ENCODE measurements at regions of chr14 and their contacts with region 1.

Region 1: DNA sequence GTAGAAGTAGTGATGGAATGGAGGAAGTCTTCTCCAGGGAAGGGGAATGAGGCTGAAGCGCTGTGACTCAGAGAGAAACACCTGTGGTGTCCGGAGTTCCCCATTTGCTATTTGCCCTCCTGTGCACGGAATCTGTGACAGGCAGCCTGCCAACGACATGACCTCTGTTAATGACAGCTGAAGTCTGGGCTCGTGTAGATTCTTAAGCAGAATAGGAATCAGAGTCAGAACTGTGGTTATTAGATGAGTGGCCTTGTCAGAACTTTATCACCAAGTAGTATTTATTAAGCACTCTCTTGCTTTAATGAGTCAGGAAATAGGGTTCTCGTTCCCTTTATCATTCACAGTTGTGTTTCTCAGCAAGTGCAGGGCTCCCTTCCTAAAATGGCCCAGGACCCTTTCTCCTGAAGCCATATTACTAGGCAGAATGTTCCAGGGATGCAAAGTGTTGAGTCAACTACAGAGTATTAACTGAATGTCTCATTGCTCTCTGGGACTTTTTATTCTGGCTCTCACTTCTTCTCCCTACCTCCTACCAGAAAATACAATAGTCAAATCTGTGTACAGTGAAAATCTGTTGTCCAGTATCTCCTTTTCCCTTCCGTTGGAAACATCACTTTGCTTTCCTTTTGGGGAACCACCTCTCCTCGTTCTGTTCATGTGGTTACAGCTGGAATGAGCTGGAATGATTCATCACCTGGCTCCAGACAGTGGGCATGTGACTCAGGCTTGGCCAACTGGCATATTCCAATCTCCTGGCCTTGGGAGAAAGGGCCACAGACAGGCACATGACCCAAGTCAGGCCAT is 77.8 kb upstream of the MAX start:
- ATAC-seq: peak in 4 of 8 experiments; percentile 18 to 99 (median 72)
- H3K4me3 ChIP-seq: no peak overlapping the region
- H3K27ac ChIP-seq: no peak overlapping the region
- H3K4me1 ChIP-seq: peaks cover 0 to 15% of the 10 kb centered on the region in 2 donors

Region 2: GRCh38 chr14:65377590-65377989 is 197.5 kb after region 1 on chr14:
- in situ Hi-C with region 1: no loop called
- ATAC-seq: peak in 5 of 8 experiments; percentile 15 to 33 (median 21)
- H3K4me3 ChIP-seq: no peak overlapping the region
- H3K27ac ChIP-seq: no peak overlapping the region
- H3K4me1 ChIP-seq: peaks cover 0 to 5% of the 10 kb centered on the region in 2 donors

Region 3: GRCh38 chr14:65958664-65959562 is 778.8 kb after region 1 on chr14:
- in situ Hi-C with region 1: loop called in 1 of 9 experiments (anchors 25 kb)
- ATAC-seq: peak; percentile 44 to 81 (median 52)
- H3K4me3 ChIP-seq: no peak overlapping the region
- H3K27ac ChIP-seq: no peak overlapping the region
- H3K4me1 ChIP-seq: peaks cover 3 to 24% of the 10 kb centered on the region in 2 donors

Measured in motor neuron (in vitro differentiated cells).